Aorta (tissue), 5 donors: ENCODE measurements at regions of chr6 and their contacts with region 1.

Region 1: DNA sequence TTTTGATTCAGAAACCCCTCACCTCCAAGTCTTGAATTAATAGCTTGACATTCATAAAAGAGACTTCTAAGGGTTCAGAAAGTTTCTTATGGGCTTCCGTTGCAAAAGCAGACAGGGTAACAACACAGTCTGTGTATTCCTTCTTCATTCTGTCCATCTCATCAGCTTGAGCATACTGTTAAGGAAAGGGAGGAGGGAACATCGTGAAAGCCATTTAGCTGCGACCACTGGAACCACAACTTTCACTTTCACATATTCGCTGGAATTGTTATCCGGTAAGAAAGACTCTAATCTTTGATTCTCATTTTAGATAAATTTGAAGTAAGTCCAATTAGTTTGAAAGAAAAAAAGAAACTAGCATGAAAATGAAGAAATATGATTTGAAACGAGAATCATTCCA is 174.4 kb downstream of the SYNE1 start:
- DNase-seq: no peak
- ATAC-seq: no peak
- H3K4me3 ChIP-seq: no peak overlapping the region
- H3K27ac ChIP-seq: no peak overlapping the region
- H3K4me1 ChIP-seq: no peaks in the 10 kb centered on the region
- H3K27me3 ChIP-seq: no peaks in the 10 kb centered on the region

Region 2: DNA sequence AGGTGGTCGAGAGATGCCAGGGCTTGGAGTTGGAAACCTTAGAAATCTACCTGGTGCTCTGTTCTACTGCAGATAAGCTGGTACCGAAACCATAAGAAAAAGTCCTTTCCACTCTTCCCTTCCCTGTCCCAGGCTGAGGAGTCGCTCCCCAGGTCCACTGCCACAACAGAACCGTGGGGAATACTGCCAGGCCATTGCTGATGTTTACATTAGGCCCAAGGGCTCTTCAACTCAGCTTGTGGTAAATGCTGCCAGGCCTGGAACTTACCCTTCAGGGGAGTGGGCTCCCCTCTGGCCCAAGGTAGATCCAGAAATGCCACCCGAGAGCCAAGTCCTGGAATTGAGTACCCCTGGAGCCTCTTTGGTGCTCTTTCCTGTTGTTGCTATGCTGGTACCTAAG is 266.8 kb before region 1 on chr6:
- intact Hi-C with region 1: no loop called
- DNase-seq: no peak
- ATAC-seq: no peak
- H3K4me3 ChIP-seq: no peak overlapping the region
- H3K27ac ChIP-seq: no peak overlapping the region
- H3K4me1 ChIP-seq: no peaks in the 10 kb centered on the region
- H3K27me3 ChIP-seq: no peaks in the 10 kb centered on the region

Region 3: DNA sequence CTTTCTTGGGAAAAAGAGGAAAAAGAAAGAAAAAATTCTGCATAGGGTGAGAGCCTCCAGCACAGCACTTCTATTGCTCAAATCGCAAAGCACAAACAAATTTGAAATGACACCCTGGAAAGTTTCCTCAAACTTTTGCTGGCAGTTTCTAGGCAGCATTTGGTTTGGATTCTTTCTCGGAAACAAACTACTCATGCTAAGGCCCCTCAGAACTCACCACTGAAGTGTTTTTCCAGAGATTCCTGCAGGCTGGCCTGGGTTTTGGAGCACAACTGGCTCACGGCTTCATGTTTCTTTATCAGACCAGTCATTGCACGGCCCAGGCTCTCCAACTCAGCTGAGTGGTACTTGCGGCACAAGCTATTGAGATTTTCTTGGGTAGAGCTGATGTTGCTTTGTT is 63.3 kb before region 1 on chr6:
- intact Hi-C with region 1: no loop called
- DNase-seq: peak; percentile 81 to 82
- ATAC-seq: peak; percentile 85
- H3K4me3 ChIP-seq: peak overlapping the region in 1 of 2 donors; percentile 48
- H3K27ac ChIP-seq: peak overlapping the region; percentile 83 to 100
- H3K4me1 ChIP-seq: peaks cover 5 to 8% of the 10 kb centered on the region in 2 donors
- H3K27me3 ChIP-seq: no peaks in the 10 kb centered on the region

Region 4: DNA sequence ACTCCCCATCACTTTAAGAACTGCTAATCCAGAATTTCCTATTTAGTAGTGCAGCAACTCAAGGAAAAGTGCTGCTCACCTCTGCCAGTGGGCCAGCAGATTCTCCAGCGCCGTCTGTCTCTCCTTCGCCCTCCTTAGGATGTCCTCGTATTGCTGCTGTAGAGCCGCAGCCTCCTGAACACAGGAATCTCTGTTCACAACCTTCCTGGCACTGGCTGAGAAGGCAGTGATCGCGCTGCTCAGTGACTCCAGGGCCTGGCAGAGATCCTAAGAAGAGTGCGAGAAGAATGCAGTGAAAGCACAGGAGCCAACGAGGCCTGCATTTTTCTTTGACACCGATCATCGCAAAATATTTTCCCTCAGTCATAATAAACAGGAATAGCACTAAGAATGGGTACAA is 34.6 kb before region 1 on chr6:
- intact Hi-C with region 1: loop called in 1 of 2 experiments (anchors 2 kb)
- DNase-seq: peak in 1 of 2 donors; percentile 61
- ATAC-seq: no peak
- H3K4me3 ChIP-seq: peak overlapping the region in 1 of 2 donors; percentile 59
- H3K27ac ChIP-seq: peak overlapping the region in 1 of 2 donors; percentile 17
- H3K4me1 ChIP-seq: peaks cover 0 to 3% of the 10 kb centered on the region in 2 donors
- H3K27me3 ChIP-seq: no peaks in the 10 kb centered on the region

Region 5: DNA sequence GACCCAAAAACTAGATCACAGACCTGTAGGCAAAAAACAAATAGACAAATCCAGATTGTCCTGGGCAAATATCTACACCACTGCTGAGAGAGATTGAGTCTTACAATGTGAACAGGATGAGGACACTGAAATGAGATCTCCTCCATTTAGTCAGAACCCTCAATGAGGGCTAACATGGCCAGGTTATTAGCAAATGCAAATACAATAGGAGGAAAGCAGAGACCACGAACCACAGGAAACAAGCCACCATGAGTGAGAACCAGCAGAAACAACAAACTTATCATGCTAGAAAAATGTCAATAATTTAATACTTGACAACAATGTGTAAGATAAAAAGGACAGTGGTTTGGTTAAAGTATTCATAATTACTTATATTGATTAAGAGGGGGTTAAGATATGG is 11.6 kb after region 1 on chr6:
- intact Hi-C with region 1: no loop called
- DNase-seq: no peak
- ATAC-seq: no peak
- H3K4me3 ChIP-seq: no peak overlapping the region
- H3K27ac ChIP-seq: no peak overlapping the region
- H3K4me1 ChIP-seq: no peaks in the 10 kb centered on the region
- H3K27me3 ChIP-seq: no peaks in the 10 kb centered on the region